MCF 10A (cell line): ENCODE measurements at regions of chr9 and their contacts with region 1.

Region 1: GRCh38 chr9:2132484-2133082 is 117.4 kb downstream of the SMARCA2 start:
- DNase-seq: peak; percentile 40
- H3K4me3 Mint-ChIP-seq: no peak overlapping the region
- H3K27ac Mint-ChIP-seq: no peak overlapping the region
- H3K4me1 Mint-ChIP-seq: peaks cover 7% of the 10 kb centered on the region
- H3K27me3 Mint-ChIP-seq: no peaks in the 10 kb centered on the region
- CTCF ChIP-seq: peak; percentile 67

Region 2: GRCh38 chr9:2120926-2121689 is 11.5 kb before region 1 on chr9:
- CTCF ChIA-PET with region 1: interaction called, 25 read pairs
- POLR2A ChIA-PET with region 1: interaction called, 3 read pairs
- intact Hi-C with region 1: no loop called
- DNase-seq: peak; percentile 45
- H3K4me3 Mint-ChIP-seq: no peak overlapping the region
- H3K27ac Mint-ChIP-seq: no peak overlapping the region
- H3K4me1 Mint-ChIP-seq: no peaks in the 10 kb centered on the region
- H3K27me3 Mint-ChIP-seq: no peaks in the 10 kb centered on the region
- CTCF ChIP-seq: no peak

Region 3: DNA sequence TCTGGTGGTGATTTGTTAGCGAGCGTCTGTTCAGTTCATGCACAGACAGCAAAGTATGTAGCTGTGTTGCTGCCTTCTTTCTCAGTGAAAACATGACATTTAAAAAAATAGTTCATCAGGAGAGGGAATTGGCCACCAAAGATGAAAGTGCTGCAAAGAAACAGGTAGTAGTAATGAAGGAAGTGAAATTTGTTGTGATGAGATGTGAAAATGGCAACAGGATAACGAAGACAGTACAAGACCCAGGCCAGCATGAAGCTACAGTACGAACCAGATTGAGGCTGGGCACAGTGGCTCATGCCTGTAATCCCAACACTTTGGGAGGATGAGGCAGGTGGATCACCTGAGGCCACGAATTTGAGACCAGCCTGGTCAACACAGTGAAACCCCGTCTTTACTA is 18.6 kb after region 1 on chr9:
- CTCF ChIA-PET with region 1: interaction called, 11 read pairs
- POLR2A ChIA-PET with region 1: no interaction called
- intact Hi-C with region 1: no loop called
- DNase-seq: no peak
- H3K4me3 Mint-ChIP-seq: no peak overlapping the region
- H3K27ac Mint-ChIP-seq: no peak overlapping the region
- H3K4me1 Mint-ChIP-seq: peaks cover 6% of the 10 kb centered on the region
- H3K27me3 Mint-ChIP-seq: no peaks in the 10 kb centered on the region
- CTCF ChIP-seq: no peak

Region 4: GRCh38 chr9:2181792-2182191 is 49.2 kb after region 1 on chr9:
- CTCF ChIA-PET with region 1: interaction called, 7 read pairs
- POLR2A ChIA-PET with region 1: no interaction called
- intact Hi-C with region 1: loop called (anchors 1 kb)
- DNase-seq: peak; percentile 53
- H3K4me3 Mint-ChIP-seq: no peak overlapping the region
- H3K27ac Mint-ChIP-seq: no peak overlapping the region
- H3K4me1 Mint-ChIP-seq: no peaks in the 10 kb centered on the region
- H3K27me3 Mint-ChIP-seq: no peaks in the 10 kb centered on the region
- CTCF ChIP-seq: peak; percentile 52

Region 5: GRCh38 chr9:2469681-2470221 is 337.2 kb after region 1 on chr9:
- CTCF ChIA-PET with region 1: interaction called, 3 read pairs
- POLR2A ChIA-PET with region 1: no interaction called
- intact Hi-C with region 1: loop called (anchors 1 kb)
- DNase-seq: peak; percentile 22
- H3K4me3 Mint-ChIP-seq: no peak overlapping the region
- H3K27ac Mint-ChIP-seq: no peak overlapping the region
- H3K4me1 Mint-ChIP-seq: no peaks in the 10 kb centered on the region
- H3K27me3 Mint-ChIP-seq: no peaks in the 10 kb centered on the region
- CTCF ChIP-seq: peak; percentile 13

Region 6: DNA sequence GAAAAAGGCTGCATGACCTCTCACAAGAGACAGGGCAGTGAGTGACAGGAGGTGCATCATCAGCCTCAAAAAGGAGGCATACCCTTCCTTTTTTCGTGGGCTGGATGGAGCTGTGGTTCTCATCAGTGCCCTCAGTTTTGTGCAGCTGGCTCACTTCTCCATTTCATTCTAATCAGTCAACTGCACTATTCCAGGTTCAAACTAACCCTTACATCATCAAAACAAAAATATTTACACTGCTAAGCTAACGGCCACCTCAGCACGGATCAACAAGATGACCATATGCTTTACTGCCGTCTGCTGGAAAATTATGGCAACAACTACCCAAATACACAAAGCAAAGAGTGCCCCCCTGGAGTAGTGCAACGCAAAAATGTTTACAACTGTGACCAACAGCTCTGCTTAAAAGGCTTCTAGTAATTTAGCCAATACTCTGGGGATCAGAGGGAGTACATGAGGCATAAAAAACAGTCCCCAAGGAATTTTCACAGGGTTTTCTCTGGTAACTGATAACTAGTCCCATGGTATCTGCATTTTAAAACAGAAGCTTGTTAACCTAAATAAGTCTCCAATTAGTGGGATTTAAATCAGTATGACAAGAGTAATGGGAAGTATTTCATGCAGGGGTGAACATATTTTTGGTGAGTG is 595.5 kb after region 1 on chr9:
- CTCF ChIA-PET with region 1: interaction called, 19 read pairs
- POLR2A ChIA-PET with region 1: no interaction called
- intact Hi-C with region 1: loop called (anchors 1 kb)
- DNase-seq: peak; percentile 62
- H3K4me3 Mint-ChIP-seq: no peak overlapping the region
- H3K27ac Mint-ChIP-seq: no peak overlapping the region
- H3K4me1 Mint-ChIP-seq: peaks cover 6% of the 10 kb centered on the region
- H3K27me3 Mint-ChIP-seq: no peaks in the 10 kb centered on the region
- CTCF ChIP-seq: peak; percentile 36

Region 7: DNA sequence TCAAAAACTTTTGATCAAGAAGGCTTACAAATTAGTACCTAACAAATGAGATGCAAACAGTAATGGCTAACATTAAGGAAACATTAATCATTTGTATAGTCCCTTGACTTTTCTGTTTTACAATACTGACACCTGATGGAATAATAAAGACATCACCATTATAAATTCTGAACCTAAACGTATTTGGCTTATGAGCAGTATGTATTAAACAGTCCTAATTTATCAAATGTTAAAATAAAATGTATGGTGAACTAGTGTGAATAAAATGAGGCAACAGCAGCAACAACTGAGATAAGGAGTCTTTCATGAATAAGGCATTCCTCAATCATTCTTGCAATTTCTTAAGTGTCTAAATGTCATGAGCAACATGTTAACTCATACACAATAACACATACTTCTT is 705.3 kb after region 1 on chr9:
- CTCF ChIA-PET with region 1: interaction called, 8 read pairs
- POLR2A ChIA-PET with region 1: interaction called, 6 read pairs
- intact Hi-C with region 1: loop called (anchors 5 kb)
- DNase-seq: no peak
- H3K4me3 Mint-ChIP-seq: peak overlapping the region; percentile 63
- H3K27ac Mint-ChIP-seq: peak overlapping the region; percentile 84
- H3K4me1 Mint-ChIP-seq: peaks cover 24% of the 10 kb centered on the region
- H3K27me3 Mint-ChIP-seq: no peaks in the 10 kb centered on the region
- CTCF ChIP-seq: peak; percentile 35